BJ (cell line): ENCODE measurements at regions of chr5 and their contacts with region 1.

Region 1: DNA sequence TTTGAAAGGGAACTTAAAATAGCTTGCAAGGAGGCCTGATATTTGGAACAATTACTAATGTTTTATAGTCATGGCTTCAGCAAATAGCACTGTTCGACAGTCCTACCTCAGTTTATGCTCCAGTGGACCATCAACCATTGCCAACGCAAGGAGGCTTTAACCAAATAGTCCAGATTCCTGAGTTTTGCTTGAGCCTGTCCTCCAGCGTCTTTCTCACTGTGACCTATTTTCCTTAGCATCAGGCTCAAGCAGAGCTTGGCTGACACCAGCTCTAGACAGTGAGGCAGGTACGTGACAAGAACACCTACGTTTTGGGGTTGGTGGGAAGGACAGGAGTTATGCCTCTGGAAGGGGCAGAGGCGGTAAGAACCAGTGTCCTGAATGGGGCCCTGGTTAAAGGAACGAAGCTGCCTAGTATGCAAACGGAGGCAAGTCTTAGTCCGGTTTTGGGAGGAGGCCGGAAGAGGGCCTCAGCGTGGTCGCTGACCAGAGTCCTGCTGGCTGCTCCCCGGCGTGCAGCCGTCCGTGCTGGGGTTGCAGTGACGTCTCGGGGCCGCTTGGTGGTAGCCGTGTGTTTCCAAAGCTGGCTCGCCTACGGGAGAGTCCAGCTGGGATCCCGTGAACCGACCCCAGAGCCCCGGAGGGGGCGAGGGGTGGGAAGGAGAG is 998 bp upstream of the FGF18 start:
- DNase-seq: peak; percentile 11
- H3K4me3 ChIP-seq: peak overlapping the region; percentile 17
- H3K27me3 ChIP-seq: no peaks in the 10 kb centered on the region; the same call in none of the 2 replicates
- CTCF ChIP-seq: peak; percentile 96

Region 2: GRCh38 chr5:171484460-171484899 is 66.0 kb after region 1 on chr5:
- CTCF ChIA-PET with region 1: interaction called, 13 read pairs
- POLR2A ChIA-PET with region 1: no interaction called
- DNase-seq: no peak
- H3K4me3 ChIP-seq: no peak overlapping the region
- H3K27me3 ChIP-seq: peaks cover 8% of the 10 kb centered on the region
- CTCF ChIP-seq: peak; percentile 78

Region 3: GRCh38 chr5:171630027-171630669 is 211.7 kb after region 1 on chr5:
- CTCF ChIA-PET with region 1: interaction called, 13 read pairs
- POLR2A ChIA-PET with region 1: no interaction called
- DNase-seq: no peak
- H3K4me3 ChIP-seq: no peak overlapping the region
- H3K27me3 ChIP-seq: peaks cover 17% of the 10 kb centered on the region
- CTCF ChIP-seq: peak; percentile 72

Region 4: DNA sequence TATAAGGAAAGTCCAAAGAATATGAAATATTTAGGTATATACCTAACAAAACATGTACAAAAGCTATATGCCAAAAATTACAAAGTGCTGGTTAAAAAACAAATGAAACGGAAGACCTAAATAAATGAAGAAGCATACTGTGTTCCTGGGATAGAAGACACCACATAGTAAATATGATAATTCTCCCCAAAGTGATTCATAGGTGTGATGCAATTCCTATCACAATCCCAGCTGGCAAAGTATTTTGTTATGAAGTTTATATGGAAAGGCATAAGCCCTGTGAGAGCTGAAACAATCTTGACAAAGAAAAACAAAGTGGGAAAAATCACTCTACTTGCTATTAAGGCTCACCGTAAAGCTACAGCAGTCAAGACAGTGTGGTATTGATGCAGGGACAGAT is 364.6 kb after region 1 on chr5:
- CTCF ChIA-PET with region 1: no interaction called
- POLR2A ChIA-PET with region 1: no interaction called
- DNase-seq: no peak
- H3K4me3 ChIP-seq: no peak overlapping the region
- H3K27me3 ChIP-seq: no peaks in the 10 kb centered on the region; the same call in 1 of the 2 replicates
- CTCF ChIP-seq: no peak

Region 5: GRCh38 chr5:171907725-171908343 is 489.4 kb after region 1 on chr5:
- CTCF ChIA-PET with region 1: interaction called, 52 read pairs
- POLR2A ChIA-PET with region 1: interaction called, 5 read pairs
- DNase-seq: no peak
- H3K4me3 ChIP-seq: no peak overlapping the region
- H3K27me3 ChIP-seq: no peaks in the 10 kb centered on the region
- CTCF ChIP-seq: peak; percentile 78